ENCODE measurements at regions of chr12 and their contacts with region 1.

Region 1: GRCh38 chr12:65313719-65314317 is 35.3 kb downstream of the MSRB3 start:
- DNase-seq: peak in 1 of 4 experiments; percentile 3
- ATAC-seq: no peak
- H3K4me3 ChIP-seq: no peak overlapping the region
- H3K27ac ChIP-seq: no peak overlapping the region
- H3K4me1 ChIP-seq: no peaks in the 10 kb centered on the region
- H3K27me3 ChIP-seq: no peaks in the 10 kb centered on the region
- CTCF ChIP-seq: peak in 1 of 3 experiments; percentile 70; a peak in 2 of 6 replicates
- EP300 ChIP-seq: no peak
- POLR2A ChIP-seq: no peak
- RAD21 ChIP-seq: peak; percentile 69 to 72

Region 2: GRCh38 chr12:65372574-65372973 is 58.8 kb after region 1 on chr12:
- CTCF ChIA-PET with region 1: no interaction called
- POLR2A ChIA-PET with region 1: no interaction called
- in situ Hi-C with region 1: no loop called
- intact Hi-C with region 1: no loop called
- DNase-seq: no peak
- ATAC-seq: no peak
- H3K4me3 ChIP-seq: no peak overlapping the region
- H3K27ac ChIP-seq: no peak overlapping the region
- H3K4me1 ChIP-seq: no peaks in the 10 kb centered on the region
- H3K27me3 ChIP-seq: no peaks in the 10 kb centered on the region; a peak in 1 of 5 replicates
- CTCF ChIP-seq: no peak
- EP300 ChIP-seq: no peak
- POLR2A ChIP-seq: no peak
- RAD21 ChIP-seq: no peak

Region 3: DNA sequence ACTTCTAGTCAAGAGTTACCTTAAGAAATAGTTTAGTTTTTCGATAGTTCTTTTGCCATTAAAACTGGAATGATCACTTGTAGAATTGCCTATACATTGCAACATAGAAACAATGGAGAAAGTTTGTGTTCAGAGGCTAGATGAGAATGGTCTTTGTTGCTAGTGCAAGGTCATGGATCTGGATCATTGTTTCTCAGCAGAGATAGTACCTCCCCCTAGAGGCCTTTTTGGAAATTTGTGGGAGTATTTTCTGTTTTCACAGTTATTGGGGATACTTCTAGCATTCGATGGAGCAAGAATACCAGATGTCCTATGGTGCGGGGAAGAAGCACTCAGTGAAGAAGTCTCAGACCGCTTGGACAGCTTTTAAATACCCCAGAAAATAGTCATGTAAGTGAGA is 371.7 kb after region 1 on chr12:
- CTCF ChIA-PET with region 1: no interaction called
- POLR2A ChIA-PET with region 1: no interaction called
- in situ Hi-C with region 1: no loop called
- intact Hi-C with region 1: loop called (anchors 10 kb)
- DNase-seq: peak; percentile 20 to 34 (median 25)
- ATAC-seq: peak; percentile 79
- H3K4me3 ChIP-seq: no peak overlapping the region
- H3K27ac ChIP-seq: no peak overlapping the region
- H3K4me1 ChIP-seq: peaks cover 0 to 10% of the 10 kb centered on the region in 2 experiments; a peak in 2 of 5 replicates
- H3K27me3 ChIP-seq: no peaks in the 10 kb centered on the region
- CTCF ChIP-seq: peak; percentile 50 to 70 (median 60)
- EP300 ChIP-seq: no peak
- POLR2A ChIP-seq: no peak
- RAD21 ChIP-seq: peak; percentile 55 to 81

Region 4: GRCh38 chr12:66087365-66087943 is 773.6 kb after region 1 on chr12:
- CTCF ChIA-PET with region 1: no interaction called
- POLR2A ChIA-PET with region 1: no interaction called
- in situ Hi-C with region 1: loop called (anchors 10 kb)
- intact Hi-C with region 1: loop called (anchors 5 kb)
- DNase-seq: peak; percentile 23 to 61 (median 32)
- ATAC-seq: peak; percentile 85
- H3K4me3 ChIP-seq: no peak overlapping the region
- H3K27ac ChIP-seq: no peak overlapping the region
- H3K4me1 ChIP-seq: no peaks in the 10 kb centered on the region
- H3K27me3 ChIP-seq: peaks cover 2 to 8% of the 10 kb centered on the region in 2 experiments; a peak in 1 of 5 replicates
- CTCF ChIP-seq: peak; percentile 64 to 76 (median 73)
- EP300 ChIP-seq: no peak
- POLR2A ChIP-seq: no peak
- RAD21 ChIP-seq: peak; percentile 72 to 74